PC-3 (cell line): ENCODE measurements at regions of chr2 and their contacts with region 1.

Region 1: DNA sequence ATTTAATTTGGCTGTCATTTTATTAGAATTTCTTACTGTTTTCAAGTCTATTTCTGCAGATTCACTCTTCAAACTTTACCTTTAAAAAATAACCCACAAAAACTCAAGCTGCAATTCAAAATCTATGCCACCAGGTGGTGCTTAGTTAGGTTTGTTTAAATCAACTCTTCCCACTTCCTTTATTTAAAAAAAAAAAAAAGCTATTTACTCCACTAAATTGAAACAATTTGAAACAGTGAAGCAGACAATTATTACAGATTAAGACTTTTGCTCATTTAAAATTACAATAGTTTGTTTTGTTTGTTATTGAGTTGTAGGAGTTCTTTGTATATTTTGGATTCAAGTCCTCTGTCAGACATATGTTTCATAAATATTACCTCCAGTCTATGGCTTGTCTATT is 300.0 kb downstream of the PDE11A start:
- DNase-seq: peak; percentile 76
- ATAC-seq: no peak
- H3K4me3 ChIP-seq: no peak overlapping the region
- H3K27ac ChIP-seq: no peak overlapping the region
- H3K4me1 ChIP-seq: no peaks in the 10 kb centered on the region
- H3K27me3 ChIP-seq: peaks cover 2% of the 10 kb centered on the region; the same call in 1 of the 2 replicates
- CTCF ChIP-seq: peak; percentile 66

Region 2: GRCh38 chr2:177784745-177785067 is 12.2 kb after region 1 on chr2:
- CTCF ChIA-PET with region 1: no interaction called
- POLR2A ChIA-PET with region 1: no interaction called
- intact Hi-C with region 1: no loop called
- DNase-seq: peak; percentile 63
- ATAC-seq: no peak
- H3K4me3 ChIP-seq: peak overlapping the region; percentile 33; the same call in 1 of the 2 replicates
- H3K27ac ChIP-seq: no peak overlapping the region
- H3K4me1 ChIP-seq: peaks cover 31% of the 10 kb centered on the region
- H3K27me3 ChIP-seq: no peaks in the 10 kb centered on the region
- CTCF ChIP-seq: no peak

Region 3: GRCh38 chr2:177799531-177799930 is 27.0 kb after region 1 on chr2:
- CTCF ChIA-PET with region 1: interaction called, 10 read pairs
- POLR2A ChIA-PET with region 1: no interaction called
- intact Hi-C with region 1: no loop called
- DNase-seq: peak; percentile 48
- ATAC-seq: peak; percentile 87
- H3K4me3 ChIP-seq: no peak overlapping the region
- H3K27ac ChIP-seq: no peak overlapping the region
- H3K4me1 ChIP-seq: no peaks in the 10 kb centered on the region
- H3K27me3 ChIP-seq: peaks cover 8% of the 10 kb centered on the region; the same call in 1 of the 2 replicates
- CTCF ChIP-seq: peak; percentile 72

Region 4: GRCh38 chr2:178280244-178280852 is 507.8 kb after region 1 on chr2:
- CTCF ChIA-PET with region 1: no interaction called
- POLR2A ChIA-PET with region 1: no interaction called
- intact Hi-C with region 1: no loop called
- DNase-seq: peak; percentile 80
- ATAC-seq: peak; percentile 15; the same call in 1 of the 2 replicates
- H3K4me3 ChIP-seq: no peak overlapping the region
- H3K27ac ChIP-seq: peak overlapping the region; percentile 79; the same call in 1 of the 2 replicates
- H3K4me1 ChIP-seq: peaks cover 30% of the 10 kb centered on the region
- H3K27me3 ChIP-seq: no peaks in the 10 kb centered on the region
- CTCF ChIP-seq: peak; percentile 81